GM12878 (cell line): ENCODE measurements at regions of chr17 and their contacts with region 1.

Region 1: GRCh38 chr17:8156246-8156992 is 4.2 kb upstream of the PER1 start:
- DNase-seq: peak; percentile 100
- ATAC-seq: peak; percentile 83
- H3K4me3 ChIP-seq: peak overlapping the region; percentile 86
- H3K27ac ChIP-seq: peak overlapping the region; percentile 94
- H3K4me1 ChIP-seq: peaks cover 21% of the 10 kb centered on the region
- H3K27me3 ChIP-seq: no peaks in the 10 kb centered on the region
- CTCF ChIP-seq: peak in 1 of 3 experiments; percentile 23; a peak in 1 of 6 replicates
- EP300 ChIP-seq: peak; percentile 0 to 53; a peak in 3 of 4 replicates
- POLR2A ChIP-seq: peak; percentile 87
- RAD21 ChIP-seq: no peak

Region 2: DNA sequence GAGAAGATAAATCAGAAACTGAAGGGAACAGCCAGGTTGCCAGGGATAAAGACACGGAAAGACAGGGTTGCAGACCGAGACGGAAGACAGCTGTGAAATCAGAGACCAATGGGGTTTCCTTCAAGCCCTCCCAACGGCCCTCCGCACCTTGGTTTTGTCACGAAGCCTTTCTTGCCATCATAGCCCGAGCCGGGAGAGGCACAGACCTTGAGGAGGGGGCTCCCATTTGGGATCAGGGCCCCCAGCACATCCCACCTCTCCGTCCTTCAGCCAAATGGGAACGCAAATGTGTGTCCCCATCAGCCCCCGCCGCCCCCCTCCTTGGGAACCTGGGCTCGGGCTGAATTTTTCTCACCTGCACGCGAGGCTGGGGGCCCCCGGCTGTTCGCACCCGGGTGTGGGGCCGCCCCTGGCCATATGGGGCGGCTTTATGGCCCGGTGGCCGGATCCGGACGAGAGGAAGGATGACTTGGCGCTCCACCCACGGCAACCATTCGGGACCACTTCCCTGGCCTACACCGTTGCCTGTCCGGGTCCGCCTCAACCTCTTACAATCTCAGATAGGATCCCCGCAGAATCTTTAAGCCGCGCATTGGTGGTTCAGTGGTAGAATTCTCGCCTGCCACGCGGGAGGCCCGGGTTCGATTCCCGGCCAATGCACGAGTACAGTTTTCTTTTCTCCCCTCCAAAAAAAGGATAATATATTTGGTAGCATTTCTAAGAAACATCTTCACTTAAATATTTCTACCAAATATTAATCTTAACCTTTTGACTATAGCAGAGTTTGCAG is 31.1 kb before region 1 on chr17:
- CTCF ChIA-PET with region 1: interaction called, 46 read pairs
- POLR2A ChIA-PET with region 1: interaction called, 28 read pairs
- RAD21 ChIA-PET with region 1: interaction called, 16 read pairs
- SMC1A ChIA-PET with region 1: interaction called, 23 read pairs
- in situ Hi-C with region 1: no loop called
- intact Hi-C with region 1: loop called (anchors 1 kb)
- DNase-seq: peak; percentile 64
- ATAC-seq: peak; percentile 27
- H3K4me3 ChIP-seq: peak overlapping the region; percentile 99
- H3K27ac ChIP-seq: no peak overlapping the region; the same call in 1 of the 2 replicates
- H3K4me1 ChIP-seq: peaks cover 36% of the 10 kb centered on the region
- H3K27me3 ChIP-seq: peaks cover 5 to 9% of the 10 kb centered on the region in 2 experiments
- CTCF ChIP-seq: no peak
- EP300 ChIP-seq: no peak
- POLR2A ChIP-seq: no peak
- RAD21 ChIP-seq: no peak